H1 (cell line): ENCODE measurements at regions of chr3 and their contacts with region 1.

Region 1: GRCh38 chr3:28476194-28476593 is 127.6 kb upstream of the AZI2 start:
- DNase-seq: no peak
- H3K4me3 ChIP-seq: no peak overlapping the region
- H3K27ac ChIP-seq: no peak overlapping the region
- H3K4me1 ChIP-seq: no peaks in the 10 kb centered on the region
- H3K27me3 ChIP-seq: no peaks in the 10 kb centered on the region
- CTCF ChIP-seq: peak in 2 of 3 experiments; percentile 41 to 42; a peak in 2 of 4 replicates
- EP300 ChIP-seq: no peak
- POLR2A ChIP-seq: no peak
- RAD21 ChIP-seq: peak; percentile 65

Region 2: GRCh38 chr3:28502397-28502937 is 26.3 kb after region 1 on chr3:
- CTCF ChIA-PET with region 1: interaction called, 10 read pairs
- POLR2A ChIA-PET with region 1: no interaction called
- DNase-seq: no peak
- H3K4me3 ChIP-seq: no peak overlapping the region
- H3K27ac ChIP-seq: no peak overlapping the region
- H3K4me1 ChIP-seq: peaks cover 0 to 2% (median 1%) of the 10 kb centered on the region in 4 experiments; a peak in 2 of 7 replicates
- H3K27me3 ChIP-seq: no peaks in the 10 kb centered on the region
- CTCF ChIP-seq: no peak
- EP300 ChIP-seq: no peak
- POLR2A ChIP-seq: no peak
- RAD21 ChIP-seq: no peak

Region 3: GRCh38 chr3:28726840-28727239 is 250.6 kb after region 1 on chr3:
- CTCF ChIA-PET with region 1: interaction called, 13 read pairs
- POLR2A ChIA-PET with region 1: no interaction called
- DNase-seq: peak; percentile 56 to 69
- H3K4me3 ChIP-seq: no peak overlapping the region
- H3K27ac ChIP-seq: no peak overlapping the region
- H3K4me1 ChIP-seq: no peaks in the 10 kb centered on the region
- H3K27me3 ChIP-seq: no peaks in the 10 kb centered on the region
- CTCF ChIP-seq: peak; percentile 32 to 79 (median 77)
- EP300 ChIP-seq: no peak
- POLR2A ChIP-seq: no peak
- RAD21 ChIP-seq: peak; percentile 85 to 90

Region 4: GRCh38 chr3:28777806-28778475 is 301.7 kb after region 1 on chr3:
- CTCF ChIA-PET with region 1: no interaction called
- POLR2A ChIA-PET with region 1: no interaction called
- DNase-seq: no peak
- H3K4me3 ChIP-seq: no peak overlapping the region
- H3K27ac ChIP-seq: no peak overlapping the region
- H3K4me1 ChIP-seq: no peaks in the 10 kb centered on the region; a peak in 1 of 7 replicates
- H3K27me3 ChIP-seq: no peaks in the 10 kb centered on the region
- CTCF ChIP-seq: no peak
- EP300 ChIP-seq: no peak
- POLR2A ChIP-seq: no peak
- RAD21 ChIP-seq: no peak